ENCODE measurements at regions of chr20 and their contacts with region 1.

Region 1: DNA sequence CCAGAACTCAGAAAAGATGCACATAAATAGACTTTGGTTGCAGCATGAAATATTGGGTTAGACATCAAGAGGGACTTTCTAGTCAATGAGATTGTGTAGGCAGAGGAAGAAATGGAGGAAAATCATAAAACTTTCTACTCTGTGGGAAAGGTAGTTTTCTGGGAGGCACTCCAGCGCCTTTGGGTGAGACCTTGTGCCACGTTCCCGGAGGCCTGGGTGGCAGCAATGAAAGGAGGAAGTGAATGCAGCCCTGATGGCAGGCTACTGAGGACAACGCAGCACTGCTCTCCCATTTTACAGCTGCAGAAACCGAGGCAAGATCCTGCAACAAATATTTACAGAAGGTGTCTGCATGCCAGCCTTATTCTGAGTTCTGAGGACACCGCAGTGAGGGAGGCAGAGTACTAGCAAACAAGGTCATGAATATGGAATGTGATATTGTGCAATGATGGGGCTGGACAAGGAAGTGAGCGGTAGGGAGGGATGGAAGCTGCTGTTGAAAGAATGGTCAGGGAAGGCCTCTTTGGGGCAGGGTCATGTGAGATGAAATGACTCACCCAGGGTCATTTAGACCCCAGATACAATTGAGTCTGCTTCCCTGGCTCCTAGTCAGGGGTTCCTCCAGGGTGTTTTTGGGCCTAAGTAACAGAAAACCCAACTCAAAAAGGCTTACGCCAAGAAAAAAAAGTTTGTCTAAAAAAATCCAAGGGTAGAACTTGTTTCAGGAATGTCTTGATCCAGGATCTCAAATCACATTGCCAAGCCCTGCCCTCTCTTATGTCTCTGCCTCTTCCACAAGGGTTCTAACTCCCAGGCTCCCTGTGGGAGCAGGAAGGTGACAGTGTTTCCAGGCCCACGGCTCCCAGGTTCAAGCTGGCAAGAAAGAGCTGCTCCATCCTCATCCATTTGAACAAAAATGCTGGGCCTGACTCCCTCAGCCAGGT is 159.2 kb downstream of the TFAP2C start:
- DNase-seq: peak; percentile 99
- ATAC-seq: peak; percentile 70
- H3K4me3 ChIP-seq: peak overlapping the region; percentile 46
- H3K27ac ChIP-seq: peak overlapping the region; percentile 98
- H3K4me1 ChIP-seq: peaks cover 52% of the 10 kb centered on the region
- H3K27me3 ChIP-seq: no peaks in the 10 kb centered on the region
- CTCF ChIP-seq: no peak

Region 2: DNA sequence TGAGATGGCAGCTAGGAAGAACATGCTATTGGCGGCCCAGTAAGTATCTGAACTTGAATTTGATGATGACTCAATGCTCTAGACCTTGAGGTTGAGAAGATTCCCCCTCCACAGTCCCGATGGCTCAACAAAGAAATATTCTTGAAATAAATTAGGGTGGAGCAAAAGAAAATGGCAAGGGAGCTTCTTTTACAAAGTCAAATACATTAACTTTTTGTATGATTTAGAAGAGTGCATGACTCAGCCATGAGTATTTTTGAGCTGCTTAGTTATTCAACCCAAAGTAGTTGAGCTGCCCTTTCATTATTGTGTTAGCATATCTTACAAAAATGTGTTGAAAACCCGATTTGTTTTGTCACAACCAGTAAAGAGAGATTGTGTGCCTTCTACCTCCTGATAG is 151.6 kb before region 1 on chr20:
- CTCF ChIA-PET with region 1: interaction called, 4 read pairs
- POLR2A ChIA-PET with region 1: no interaction called
- intact Hi-C with region 1: loop called (anchors 1 kb)
- DNase-seq: peak; percentile 98
- ATAC-seq: peak; percentile 68
- H3K4me3 ChIP-seq: peak overlapping the region; percentile 8; the same call in 1 of the 2 replicates
- H3K27ac ChIP-seq: peak overlapping the region; percentile 73
- H3K4me1 ChIP-seq: peaks cover 55% of the 10 kb centered on the region
- H3K27me3 ChIP-seq: no peaks in the 10 kb centered on the region
- CTCF ChIP-seq: no peak

Region 3: GRCh38 chr20:56664791-56665190 is 123.5 kb before region 1 on chr20:
- CTCF ChIA-PET with region 1: no interaction called
- POLR2A ChIA-PET with region 1: interaction called, 7 read pairs
- intact Hi-C with region 1: loop called (anchors 1 kb)
- DNase-seq: peak; percentile 57
- ATAC-seq: peak; percentile 68
- H3K4me3 ChIP-seq: no peak overlapping the region
- H3K27ac ChIP-seq: no peak overlapping the region
- H3K4me1 ChIP-seq: peaks cover 12% of the 10 kb centered on the region
- H3K27me3 ChIP-seq: no peaks in the 10 kb centered on the region
- CTCF ChIP-seq: no peak

Region 4: GRCh38 chr20:56711013-56711412 is 77.3 kb before region 1 on chr20:
- CTCF ChIA-PET with region 1: no interaction called
- POLR2A ChIA-PET with region 1: no interaction called
- intact Hi-C with region 1: loop called (anchors 1 kb)
- DNase-seq: peak; percentile 97
- ATAC-seq: peak; percentile 92
- H3K4me3 ChIP-seq: no peak overlapping the region
- H3K27ac ChIP-seq: peak overlapping the region; percentile 87
- H3K4me1 ChIP-seq: peaks cover 14% of the 10 kb centered on the region
- H3K27me3 ChIP-seq: no peaks in the 10 kb centered on the region
- CTCF ChIP-seq: no peak

Region 5: DNA sequence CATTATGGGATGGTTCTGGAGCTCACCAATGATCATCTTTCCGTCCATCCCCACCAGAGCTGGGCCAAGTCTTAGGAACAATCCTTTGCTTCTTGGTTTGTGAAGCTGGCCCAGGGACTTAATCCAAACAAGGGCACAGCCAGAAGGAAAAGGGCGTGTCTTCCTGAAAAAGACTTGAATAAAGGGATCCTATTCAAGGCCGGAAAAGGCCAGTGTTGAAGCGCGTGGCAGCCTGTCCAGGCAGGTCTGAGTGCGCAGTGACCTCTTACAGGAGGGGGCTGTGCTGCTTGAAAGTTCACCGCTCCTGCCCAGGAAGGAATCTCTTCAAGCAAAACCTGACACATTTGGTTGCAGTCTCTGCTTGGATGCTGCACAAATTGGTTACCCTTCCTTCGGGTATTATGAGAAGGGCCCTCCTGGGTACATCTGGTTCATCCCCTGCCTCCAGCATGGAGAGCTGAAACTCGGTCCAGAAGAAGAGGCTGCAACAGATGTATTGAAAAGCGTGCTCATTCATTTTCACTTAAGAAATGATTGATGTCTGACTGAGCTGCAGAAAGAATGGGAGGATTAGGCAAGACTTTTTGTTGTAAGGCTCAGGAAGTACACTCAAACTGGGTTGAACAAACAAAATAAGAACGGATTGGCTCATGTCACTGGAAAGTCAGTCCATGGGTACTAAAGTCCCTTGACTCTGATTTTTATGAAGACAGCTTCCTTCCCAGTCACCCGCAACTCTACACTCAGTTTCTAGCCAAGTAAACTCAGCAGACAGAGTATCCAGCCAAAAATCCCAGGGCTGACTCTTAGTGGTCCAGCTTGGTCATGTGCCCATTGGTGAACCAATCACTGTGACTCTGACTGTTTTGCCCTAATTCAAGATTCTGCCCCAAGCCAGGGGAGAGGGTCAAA is 22.9 kb before region 1 on chr20:
- CTCF ChIA-PET with region 1: no interaction called
- POLR2A ChIA-PET with region 1: no interaction called
- intact Hi-C with region 1: no loop called
- DNase-seq: peak; percentile 32
- ATAC-seq: no peak; the same call in 1 of the 2 replicates
- H3K4me3 ChIP-seq: no peak overlapping the region
- H3K27ac ChIP-seq: no peak overlapping the region
- H3K4me1 ChIP-seq: peaks cover 11% of the 10 kb centered on the region; the same call in 1 of the 2 replicates
- H3K27me3 ChIP-seq: no peaks in the 10 kb centered on the region
- CTCF ChIP-seq: no peak

Region 6: DNA sequence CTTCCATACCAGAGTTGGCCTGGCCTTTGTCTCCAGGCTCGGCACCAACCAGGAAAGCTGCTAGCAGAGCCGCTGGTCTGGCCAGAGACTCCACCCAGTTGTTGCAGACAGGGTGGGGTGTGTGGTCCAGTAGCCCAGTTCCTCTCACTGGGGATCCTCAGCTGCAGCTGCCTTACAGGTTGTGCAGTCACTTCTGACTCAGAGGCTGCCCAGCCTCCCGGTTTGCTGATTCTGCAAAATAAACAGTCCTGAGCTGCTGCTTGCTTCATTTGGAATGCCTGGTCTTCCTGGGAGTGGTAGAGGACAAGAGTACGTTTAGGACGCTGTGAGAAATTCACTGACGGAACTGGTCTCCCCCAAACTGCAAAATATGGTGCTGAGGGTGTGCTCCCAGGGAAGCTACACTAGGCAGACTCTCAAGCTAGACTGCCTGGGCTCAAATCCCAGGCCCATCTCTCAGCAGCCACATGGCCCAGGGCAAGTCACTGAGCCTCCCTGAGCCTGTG is 86.8 kb after region 1 on chr20:
- CTCF ChIA-PET with region 1: no interaction called
- POLR2A ChIA-PET with region 1: interaction called, 6 read pairs
- intact Hi-C with region 1: loop called (anchors 2 kb)
- DNase-seq: peak; percentile 99
- ATAC-seq: peak; percentile 99
- H3K4me3 ChIP-seq: peak overlapping the region; percentile 6; the same call in 1 of the 2 replicates
- H3K27ac ChIP-seq: peak overlapping the region; percentile 53
- H3K4me1 ChIP-seq: peaks cover 18% of the 10 kb centered on the region
- H3K27me3 ChIP-seq: no peaks in the 10 kb centered on the region
- CTCF ChIP-seq: no peak

Region 7: DNA sequence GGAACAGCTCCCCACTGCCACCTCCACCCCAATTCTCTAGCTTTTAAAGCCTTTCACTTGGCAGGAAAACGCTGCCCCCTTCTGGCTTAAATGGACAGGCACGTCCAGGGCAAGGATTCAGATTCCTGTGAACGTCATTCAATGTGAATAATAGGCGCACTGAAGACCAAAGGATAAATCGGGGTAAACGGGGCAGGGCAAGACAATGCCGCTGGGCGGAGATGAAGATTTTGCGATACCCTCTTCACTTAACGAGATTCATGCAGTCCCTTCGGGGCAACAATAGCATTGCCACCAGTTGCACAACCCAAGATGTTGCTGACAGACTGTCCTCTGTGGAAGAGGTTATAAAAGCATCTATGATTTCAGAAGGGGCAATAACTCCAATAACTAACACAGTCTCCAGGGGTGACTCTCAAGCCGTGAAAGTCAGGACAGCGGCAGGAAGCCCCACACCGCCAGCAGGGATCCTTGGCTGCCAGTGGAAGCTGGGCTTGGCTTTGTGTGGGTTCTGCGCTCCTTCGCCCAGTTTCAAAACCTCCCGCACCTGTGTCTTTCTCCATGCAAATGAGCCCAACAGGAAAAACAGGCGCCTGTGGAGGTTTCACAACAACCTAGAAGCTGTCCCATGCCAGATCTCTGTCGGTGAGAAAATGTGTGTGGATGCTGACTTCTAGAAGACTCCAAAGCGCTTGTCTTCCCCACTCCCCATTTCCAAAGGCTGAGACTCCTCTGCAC is 186.4 kb after region 1 on chr20:
- CTCF ChIA-PET with region 1: no interaction called
- POLR2A ChIA-PET with region 1: no interaction called
- intact Hi-C with region 1: loop called (anchors 5 kb)
- DNase-seq: peak; percentile 92
- ATAC-seq: peak; percentile 90
- H3K4me3 ChIP-seq: peak overlapping the region; percentile 48
- H3K27ac ChIP-seq: no peak overlapping the region
- H3K4me1 ChIP-seq: peaks cover 8% of the 10 kb centered on the region; the same call in 1 of the 2 replicates
- H3K27me3 ChIP-seq: no peaks in the 10 kb centered on the region
- CTCF ChIP-seq: peak; percentile 98

Region 8: GRCh38 chr20:57398231-57398821 is 610.0 kb after region 1 on chr20:
- CTCF ChIA-PET with region 1: no interaction called
- POLR2A ChIA-PET with region 1: no interaction called
- intact Hi-C with region 1: no loop called
- DNase-seq: no peak
- ATAC-seq: no peak
- H3K4me3 ChIP-seq: no peak overlapping the region
- H3K27ac ChIP-seq: no peak overlapping the region
- H3K4me1 ChIP-seq: peaks cover 1% of the 10 kb centered on the region; the same call in 1 of the 2 replicates
- H3K27me3 ChIP-seq: no peaks in the 10 kb centered on the region
- CTCF ChIP-seq: no peak